Naive thymus-derived CD4-positive, alpha-beta T cell (primary cell): ENCODE measurements at regions of chr15 and their contacts with region 1.

Region 1: DNA sequence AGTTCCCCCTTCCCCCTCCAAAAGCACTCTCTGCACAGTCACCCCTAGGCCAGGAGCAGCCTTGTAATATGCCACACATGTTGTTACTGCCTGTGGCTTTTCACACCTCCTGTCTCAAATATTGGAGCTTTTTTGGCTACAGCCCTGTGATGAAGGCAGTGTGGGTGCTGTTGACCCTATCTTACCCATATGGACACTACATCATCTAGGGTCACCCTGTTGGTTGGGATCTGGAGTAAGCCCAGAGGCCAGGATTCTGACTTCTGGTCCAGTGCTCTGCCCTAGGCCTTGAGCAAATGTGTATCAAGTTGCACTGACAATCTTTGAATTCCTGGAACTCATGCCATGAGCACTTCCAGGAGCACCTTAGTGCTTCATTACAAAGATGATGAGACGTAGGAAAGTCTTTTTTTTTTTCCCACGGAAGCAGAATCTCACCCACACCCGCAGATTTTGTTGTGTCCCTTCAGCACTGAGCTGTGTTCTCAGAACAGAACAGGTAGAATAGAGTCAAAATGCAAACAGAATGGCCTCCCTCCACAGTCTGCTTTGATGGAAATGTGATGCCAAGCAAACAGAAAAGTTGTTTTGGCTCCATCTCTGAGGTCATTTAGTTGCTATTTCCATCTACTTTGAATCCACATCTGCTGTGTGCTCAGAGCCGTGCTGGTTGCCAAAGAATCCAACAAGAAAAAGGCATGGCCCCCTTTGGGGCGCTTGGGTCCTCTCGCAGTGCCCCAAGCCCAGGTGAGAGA is 49.6 kb downstream of the SMAD3 start:
- DNase-seq: no peak
- ATAC-seq: peak; percentile 25
- H3K4me3 ChIP-seq: no peak overlapping the region
- H3K4me3 Mint-ChIP-seq: peak overlapping the region in 9 of 10 donors; percentile 10 to 74 (median 35)
- H3K27ac ChIP-seq: no peak overlapping the region
- H3K27ac Mint-ChIP-seq: peak overlapping the region in 8 of 9 donors; percentile 42 to 97 (median 71)
- H3K4me1 ChIP-seq: peaks cover 74 to 76% of the 10 kb centered on the region in 2 donors
- H3K4me1 Mint-ChIP-seq: peaks cover 62 to 92% (median 82%) of the 10 kb centered on the region in 7 donors
- H3K27me3 ChIP-seq: no peaks in the 10 kb centered on the region
- H3K27me3 Mint-ChIP-seq: no peaks in the 10 kb centered on the region

Region 2: DNA sequence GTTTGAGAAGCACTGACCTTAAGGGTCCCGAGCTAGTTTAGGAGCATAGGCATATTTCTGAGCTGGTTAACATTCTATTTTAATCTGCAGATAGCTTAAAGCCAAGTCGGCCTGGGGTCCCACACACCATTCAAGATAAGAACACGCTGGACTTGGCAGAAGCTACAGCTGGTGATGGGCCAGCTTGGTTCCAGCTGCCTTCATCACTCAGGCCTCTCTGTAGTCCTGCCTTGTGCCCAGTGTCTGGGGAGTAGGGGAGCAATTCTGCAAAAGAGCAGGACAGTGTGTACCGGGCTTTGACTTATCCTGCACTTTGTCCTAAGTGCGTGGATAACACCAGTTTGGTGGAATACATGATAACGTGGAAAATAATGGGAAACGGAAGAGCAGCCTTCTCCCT is 1026.0 kb before region 1 on chr15:
- CTCF ChIA-PET with region 1: no interaction called
- POLR2A ChIA-PET with region 1: no interaction called
- intact Hi-C with region 1: no loop called
- DNase-seq: no peak
- ATAC-seq: no peak
- H3K4me3 ChIP-seq: no peak overlapping the region
- H3K4me3 Mint-ChIP-seq: no peak overlapping the region
- H3K27ac ChIP-seq: no peak overlapping the region
- H3K27ac Mint-ChIP-seq: no peak overlapping the region
- H3K4me1 ChIP-seq: no peaks in the 10 kb centered on the region
- H3K4me1 Mint-ChIP-seq: no peaks in the 10 kb centered on the region
- H3K27me3 ChIP-seq: no peaks in the 10 kb centered on the region
- H3K27me3 Mint-ChIP-seq: peaks cover 0 to 50% (median 5%) of the 10 kb centered on the region in 5 donors

Region 3: DNA sequence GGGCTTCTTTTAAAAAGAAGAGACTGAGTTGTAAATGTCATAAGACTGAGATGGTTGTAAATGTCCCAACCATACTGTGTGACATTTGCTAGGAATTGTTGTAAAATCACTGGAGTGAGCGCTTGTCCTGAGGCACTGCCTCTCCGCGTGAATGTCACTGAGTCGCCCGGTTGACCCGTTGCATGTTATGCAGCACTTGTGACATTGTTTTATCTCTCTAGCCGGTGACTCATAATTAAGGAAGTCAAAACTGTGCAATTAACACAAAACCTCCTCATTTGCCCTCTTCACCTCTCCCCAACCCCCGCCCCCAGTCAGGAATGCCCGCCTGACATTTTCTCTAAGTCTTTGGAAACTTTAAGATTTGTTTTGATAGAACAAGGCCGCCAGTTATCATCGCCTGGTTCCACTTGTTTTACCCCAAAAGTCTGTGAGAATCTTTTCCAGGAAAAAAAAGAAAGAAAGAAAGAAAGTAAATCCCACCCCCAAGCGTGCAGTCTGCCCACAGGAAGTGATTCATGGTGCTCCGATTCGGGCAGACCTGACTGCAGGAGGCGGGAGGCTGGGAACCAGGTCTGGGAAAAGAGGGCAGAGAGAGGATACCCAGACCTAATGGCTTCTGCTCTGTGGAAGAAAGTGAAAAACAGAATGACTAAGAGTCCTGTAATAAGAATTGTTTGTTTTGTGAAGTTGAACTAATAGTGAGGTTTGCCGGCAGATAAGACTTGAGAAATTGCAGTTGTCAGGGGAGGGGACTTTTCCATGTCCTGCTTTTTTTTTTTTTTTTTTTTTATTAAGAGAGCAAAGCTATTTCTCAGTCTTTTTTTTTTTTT is 35.2 kb after region 1 on chr15:
- CTCF ChIA-PET with region 1: interaction called, 3 read pairs
- POLR2A ChIA-PET with region 1: no interaction called
- intact Hi-C with region 1: loop called in 1 of 2 experiments (anchors 5 kb)
- DNase-seq: peak in 1 of 9 donors; percentile 61
- ATAC-seq: peak; percentile 61
- H3K4me3 ChIP-seq: peak overlapping the region; percentile 0
- H3K4me3 Mint-ChIP-seq: peak overlapping the region; percentile 4 to 74 (median 49)
- H3K27ac ChIP-seq: no peak overlapping the region
- H3K27ac Mint-ChIP-seq: peak overlapping the region in 6 of 9 donors; percentile 7 to 57 (median 30)
- H3K4me1 ChIP-seq: peaks cover 35 to 48% of the 10 kb centered on the region in 2 donors
- H3K4me1 Mint-ChIP-seq: peaks cover 48 to 78% (median 65%) of the 10 kb centered on the region in 7 donors
- H3K27me3 ChIP-seq: no peaks in the 10 kb centered on the region
- H3K27me3 Mint-ChIP-seq: no peaks in the 10 kb centered on the region